ENCODE measurements at regions of chr6 and their contacts with region 1.

Region 1: DNA sequence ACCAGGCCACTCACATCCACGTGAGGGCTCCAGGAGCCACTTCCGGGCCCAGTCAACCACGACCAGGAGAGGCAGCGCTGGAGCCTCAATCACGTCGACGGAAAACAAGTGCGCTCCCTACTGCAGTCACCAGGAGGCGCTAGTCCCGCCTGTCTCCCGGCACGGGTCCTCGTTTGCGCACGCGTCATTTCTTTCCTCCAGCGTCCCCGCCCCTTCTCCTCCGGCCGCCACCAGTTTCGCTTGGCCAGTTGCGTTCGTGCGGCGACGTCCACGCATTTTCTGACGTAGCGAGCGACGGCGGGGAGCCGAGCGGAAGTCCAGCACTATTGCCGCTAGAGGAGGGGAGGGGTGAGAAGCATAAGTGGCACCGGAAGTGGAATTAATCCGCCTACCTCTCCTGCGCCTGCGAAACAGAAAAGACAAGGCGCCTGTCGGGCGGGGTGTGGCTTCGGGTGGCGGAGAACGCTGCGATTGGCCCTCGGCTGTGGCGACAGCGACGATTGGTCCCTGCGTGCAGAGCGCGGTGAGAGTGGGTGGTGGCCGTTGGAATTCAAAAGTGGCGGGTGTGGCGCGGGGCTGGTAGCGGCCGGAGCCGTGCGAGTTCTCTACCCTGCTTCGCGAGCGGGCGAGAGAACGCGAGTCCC is at the start of gene KIFC1:
- DNase-seq: peak; percentile 100
- H3K4me3 ChIP-seq: peak within 1 kb of the TSS; percentile 84 to 98 (median 93)
- H3K27ac ChIP-seq: peak within 1 kb of the TSS; percentile 30 to 84
- H3K4me1 ChIP-seq: peaks cover 10 to 34% (median 24%) of the 10 kb centered on the region in 4 experiments
- H3K27me3 ChIP-seq: no peaks in the 10 kb centered on the region

Region 2: GRCh38 chr6:33375143-33375671 is 16.2 kb before region 1 on chr6:
- CTCF ChIA-PET with region 1: interaction called, 11 read pairs
- POLR2A ChIA-PET with region 1: no interaction called
- DNase-seq: peak in 2 of 3 donors; percentile 68 to 78
- H3K4me3 ChIP-seq: no peak overlapping the region
- H3K27ac ChIP-seq: no peak overlapping the region
- H3K4me1 ChIP-seq: peaks cover 0 to 41% (median 26%) of the 10 kb centered on the region in 4 experiments
- H3K27me3 ChIP-seq: no peaks in the 10 kb centered on the region

Region 3: GRCh38 chr6:33407132-33407718 is 15.8 kb after region 1 on chr6:
- CTCF ChIA-PET with region 1: interaction called, 18 read pairs
- POLR2A ChIA-PET with region 1: no interaction called
- DNase-seq: peak; percentile 66 to 85 (median 75)
- H3K4me3 ChIP-seq: no peak overlapping the region
- H3K27ac ChIP-seq: peak overlapping the region in 1 of 2 experiments; percentile 7
- H3K4me1 ChIP-seq: peaks cover 4 to 22% (median 15%) of the 10 kb centered on the region in 4 experiments
- H3K27me3 ChIP-seq: no peaks in the 10 kb centered on the region